ENCODE measurements at regions of chr14 and their contacts with region 1.

Region 1: DNA sequence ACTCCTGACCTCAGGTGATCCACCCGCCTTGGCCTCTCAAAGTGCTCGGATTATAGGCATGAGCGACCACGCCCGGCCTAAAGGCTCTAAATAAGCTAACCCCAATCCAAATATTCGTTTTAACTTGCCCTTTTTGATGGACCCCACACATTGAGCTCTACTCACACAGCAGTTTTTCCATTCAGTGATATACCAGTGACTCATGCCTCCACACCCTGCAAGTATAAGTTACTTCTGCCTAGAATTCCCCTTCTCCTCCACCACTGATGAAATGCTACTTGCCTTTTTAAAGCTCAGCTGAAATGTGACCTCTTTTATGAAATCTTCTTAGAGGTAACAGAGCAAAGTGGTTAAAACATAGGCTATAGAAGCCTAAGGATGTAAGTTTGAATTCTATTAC is 68.8 kb downstream of the EXOC5 start:
- DNase-seq: peak; percentile 67
- H3K4me3 ChIP-seq: no peak overlapping the region
- H3K27ac ChIP-seq: no peak overlapping the region
- H3K4me1 ChIP-seq: no peaks in the 10 kb centered on the region
- H3K27me3 ChIP-seq: no peaks in the 10 kb centered on the region
- CTCF ChIP-seq: no peak

Region 2: GRCh38 chr14:56826214-56826613 is 373.7 kb before region 1 on chr14:
- CTCF ChIA-PET with region 1: no interaction called
- dilution Hi-C with region 1: no loop called
- in situ Hi-C with region 1: no loop called
- intact Hi-C with region 1: no loop called
- DNase-seq: no peak
- H3K4me3 ChIP-seq: no peak overlapping the region
- H3K27ac ChIP-seq: no peak overlapping the region
- H3K4me1 ChIP-seq: no peaks in the 10 kb centered on the region
- H3K27me3 ChIP-seq: no peaks in the 10 kb centered on the region
- CTCF ChIP-seq: no peak

Region 3: GRCh38 chr14:57153276-57153675 is 46.6 kb before region 1 on chr14:
- CTCF ChIA-PET with region 1: no interaction called
- dilution Hi-C with region 1: no loop called
- in situ Hi-C with region 1: no loop called
- intact Hi-C with region 1: no loop called
- DNase-seq: no peak
- H3K4me3 ChIP-seq: no peak overlapping the region
- H3K27ac ChIP-seq: no peak overlapping the region
- H3K4me1 ChIP-seq: no peaks in the 10 kb centered on the region
- H3K27me3 ChIP-seq: no peaks in the 10 kb centered on the region
- CTCF ChIP-seq: no peak

Region 4: DNA sequence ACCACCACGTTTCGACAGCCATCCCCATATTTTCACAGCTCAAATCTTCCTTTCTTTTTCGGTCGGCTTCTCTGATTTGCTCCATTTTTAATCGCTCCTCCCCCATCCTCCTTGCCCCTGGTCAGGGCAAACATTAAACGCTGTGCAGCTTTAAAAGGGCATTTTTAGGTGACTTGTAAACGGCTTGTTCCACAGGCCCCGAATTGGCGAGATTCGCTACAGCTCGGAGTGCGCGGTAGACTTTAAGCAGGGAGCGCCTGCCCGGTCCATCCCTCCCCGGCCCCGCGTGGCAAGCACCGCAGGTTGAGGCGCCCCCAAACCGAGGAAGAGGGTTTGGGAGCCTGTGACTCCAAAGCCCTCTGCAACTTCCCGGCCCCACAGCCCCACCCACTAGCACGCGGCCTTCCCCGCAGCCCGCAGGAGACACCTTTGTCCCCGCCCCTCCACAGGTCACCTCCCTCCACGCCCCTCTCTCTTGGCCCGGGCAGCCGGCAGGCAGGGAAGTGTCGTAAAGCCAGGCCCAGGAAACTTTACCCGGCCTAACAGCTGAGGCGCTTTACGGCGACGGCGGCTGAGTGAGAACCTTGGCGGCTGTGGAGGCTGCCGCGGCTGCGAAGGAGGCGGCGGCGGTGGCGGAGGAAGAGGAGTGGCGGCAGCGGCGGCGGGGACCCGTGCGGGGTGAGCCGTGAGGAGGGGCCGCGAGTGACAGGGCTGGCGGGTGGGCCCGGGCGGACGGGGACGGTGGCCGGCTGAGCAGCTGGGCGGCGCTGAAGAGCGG is 190.3 kb after region 1 on chr14 and contains the start of gene NAA30:
- CTCF ChIA-PET with region 1: no interaction called
- dilution Hi-C with region 1: loop called (anchors 5 kb)
- in situ Hi-C with region 1: no loop called
- intact Hi-C with region 1: no loop called
- DNase-seq: peak; percentile 90
- H3K4me3 ChIP-seq: peak within 1 kb of the TSS; percentile 76 to 89 (median 79)
- H3K27ac ChIP-seq: peak within 1 kb of the TSS; percentile 58
- H3K4me1 ChIP-seq: peaks cover 6% of the 10 kb centered on the region
- H3K27me3 ChIP-seq: no peaks in the 10 kb centered on the region
- CTCF ChIP-seq: no peak
- total RNA-seq, gene NAA30: 22.9 to 28.2 TPM

Region 5: GRCh38 chr14:57512220-57512619 is 312.3 kb after region 1 on chr14:
- CTCF ChIA-PET with region 1: no interaction called
- dilution Hi-C with region 1: no loop called
- in situ Hi-C with region 1: no loop called
- intact Hi-C with region 1: loop called (anchors 10 kb)
- DNase-seq: no peak
- H3K4me3 ChIP-seq: no peak overlapping the region
- H3K27ac ChIP-seq: no peak overlapping the region
- H3K4me1 ChIP-seq: no peaks in the 10 kb centered on the region
- H3K27me3 ChIP-seq: peaks cover 3% of the 10 kb centered on the region
- CTCF ChIP-seq: no peak

Region 6: GRCh38 chr14:58731465-58732330 is 1531.8 kb after region 1 on chr14:
- CTCF ChIA-PET with region 1: no interaction called
- dilution Hi-C with region 1: no loop called
- in situ Hi-C with region 1: no loop called
- intact Hi-C with region 1: loop called (anchors 10 kb)
- DNase-seq: peak; percentile 98
- H3K4me3 ChIP-seq: no peak overlapping the region
- H3K27ac ChIP-seq: peak overlapping the region; percentile 58
- H3K4me1 ChIP-seq: peaks cover 25% of the 10 kb centered on the region
- H3K27me3 ChIP-seq: no peaks in the 10 kb centered on the region
- CTCF ChIP-seq: no peak